ENCODE measurements at regions of chr14 and their contacts with region 1.

Region 1: GRCh38 chr14:104932676-104933631 is 8.3 kb downstream of the PLD4 start:
- DNase-seq: peak; percentile 86
- ATAC-seq: peak; percentile 81
- H3K4me3 Mint-ChIP-seq: peak overlapping the region; percentile 72
- H3K27ac Mint-ChIP-seq: no peak overlapping the region
- H3K4me1 Mint-ChIP-seq: peaks cover 16% of the 10 kb centered on the region
- H3K27me3 Mint-ChIP-seq: no peaks in the 10 kb centered on the region
- CTCF ChIP-seq: no peak

Region 2: DNA sequence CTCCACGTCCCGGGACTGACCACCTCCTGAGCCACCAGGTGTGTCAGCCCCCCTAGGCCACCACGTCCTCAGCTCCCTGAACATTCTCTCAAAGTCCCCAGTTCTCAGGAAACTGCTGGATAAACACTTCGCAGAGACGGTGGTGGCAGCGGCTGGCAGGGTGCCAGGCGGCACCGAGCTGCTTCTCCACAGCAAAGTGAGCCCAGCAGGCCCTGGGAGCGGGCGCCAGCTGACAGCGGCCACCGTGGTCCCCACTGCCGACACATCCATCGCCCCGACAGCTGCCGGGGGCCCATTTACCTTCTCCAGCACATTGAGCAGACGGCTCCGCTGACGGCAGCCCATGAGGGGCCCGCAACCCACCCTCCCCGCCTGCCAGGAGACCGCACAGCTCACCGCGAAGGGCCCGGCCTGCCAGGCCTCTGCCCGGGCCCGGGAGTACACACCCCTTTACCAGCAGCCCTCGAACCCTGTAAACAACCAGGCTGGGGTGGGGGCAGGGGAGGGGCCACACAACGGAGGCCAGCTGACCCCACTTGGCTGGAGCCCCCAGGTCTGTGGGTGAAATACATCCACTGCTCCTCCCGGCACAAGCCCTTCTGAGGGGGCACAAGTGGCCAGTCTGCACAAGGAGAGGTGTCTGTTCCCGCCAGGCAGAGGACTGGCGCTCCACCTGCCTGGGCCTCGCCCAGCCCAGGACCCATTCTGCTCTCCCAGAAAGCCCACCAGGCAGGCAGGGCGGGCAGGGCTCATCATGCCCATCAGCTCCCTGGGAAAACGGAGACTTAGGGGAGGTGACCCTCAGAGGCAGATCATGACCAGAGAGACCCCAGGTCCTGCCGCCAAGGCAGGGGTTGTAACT is 147.9 kb before region 1 on chr14:
- CTCF ChIA-PET with region 1: no interaction called
- POLR2A ChIA-PET with region 1: no interaction called
- intact Hi-C with region 1: no loop called
- DNase-seq: no peak
- ATAC-seq: no peak
- H3K4me3 Mint-ChIP-seq: no peak overlapping the region
- H3K27ac Mint-ChIP-seq: no peak overlapping the region
- H3K4me1 Mint-ChIP-seq: no peaks in the 10 kb centered on the region
- H3K27me3 Mint-ChIP-seq: no peaks in the 10 kb centered on the region
- CTCF ChIP-seq: no peak

Region 3: GRCh38 chr14:104885031-104885972 is 47.7 kb before region 1 on chr14:
- CTCF ChIA-PET with region 1: no interaction called
- POLR2A ChIA-PET with region 1: no interaction called
- intact Hi-C with region 1: no loop called
- DNase-seq: no peak
- ATAC-seq: no peak
- H3K4me3 Mint-ChIP-seq: no peak overlapping the region
- H3K27ac Mint-ChIP-seq: no peak overlapping the region
- H3K4me1 Mint-ChIP-seq: no peaks in the 10 kb centered on the region
- H3K27me3 Mint-ChIP-seq: peaks cover 2% of the 10 kb centered on the region
- CTCF ChIP-seq: no peak

Region 4: DNA sequence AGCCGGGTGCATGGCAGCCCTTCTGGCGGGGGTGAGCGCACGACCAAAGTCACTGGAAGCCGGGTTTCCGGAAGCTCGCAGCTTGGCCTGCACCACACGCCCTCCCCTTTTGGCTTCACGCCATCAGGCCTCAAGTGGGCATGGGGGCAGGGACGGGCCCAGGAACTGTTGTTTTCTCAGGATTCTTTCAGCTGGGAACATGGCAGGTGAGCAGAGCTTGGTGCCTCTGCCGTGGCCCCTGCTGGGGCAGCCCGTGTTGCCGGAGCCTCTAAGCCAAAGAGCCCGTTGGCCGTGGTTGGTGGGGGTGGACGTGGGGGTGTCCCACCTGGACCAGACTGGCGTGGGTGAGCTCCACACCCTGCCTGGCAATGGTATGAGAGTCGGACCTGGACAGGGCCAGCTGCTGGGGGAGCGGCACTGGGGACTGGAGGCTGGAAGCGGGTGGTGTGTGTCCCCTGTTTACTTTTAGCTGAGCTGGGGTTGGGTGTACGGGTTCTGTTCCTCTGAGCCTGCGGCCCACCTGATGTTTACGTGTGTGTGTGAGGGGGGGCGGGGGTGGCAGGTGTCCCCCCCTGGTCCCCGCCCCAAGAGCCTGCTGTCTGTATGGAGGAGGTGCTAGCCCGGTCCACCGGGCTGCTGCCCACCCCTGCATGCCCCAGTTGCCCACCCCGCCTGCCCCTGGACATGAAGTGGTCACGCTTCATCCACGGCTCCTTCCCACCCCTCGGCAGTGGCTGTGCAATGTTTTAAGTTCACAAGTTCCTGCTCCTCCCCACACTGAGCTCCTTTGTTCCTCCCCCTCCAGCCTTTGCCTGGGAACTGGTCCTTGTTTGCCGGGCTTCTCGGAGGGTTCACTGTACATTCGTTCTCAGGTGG is 36.9 kb before region 1 on chr14:
- CTCF ChIA-PET with region 1: interaction called, 33 read pairs
- POLR2A ChIA-PET with region 1: interaction called, 21 read pairs
- intact Hi-C with region 1: loop called (anchors 1 kb)
- DNase-seq: no peak
- ATAC-seq: no peak
- H3K4me3 Mint-ChIP-seq: no peak overlapping the region
- H3K27ac Mint-ChIP-seq: no peak overlapping the region
- H3K4me1 Mint-ChIP-seq: peaks cover 6% of the 10 kb centered on the region
- H3K27me3 Mint-ChIP-seq: peaks cover 5% of the 10 kb centered on the region
- CTCF ChIP-seq: no peak

Measured in activated B cell treated with CpG ODN at 0.5 μM for 24 hours (primary cell).